ENCODE measurements at regions of chr19 and their contacts with region 1.

Region 1: DNA sequence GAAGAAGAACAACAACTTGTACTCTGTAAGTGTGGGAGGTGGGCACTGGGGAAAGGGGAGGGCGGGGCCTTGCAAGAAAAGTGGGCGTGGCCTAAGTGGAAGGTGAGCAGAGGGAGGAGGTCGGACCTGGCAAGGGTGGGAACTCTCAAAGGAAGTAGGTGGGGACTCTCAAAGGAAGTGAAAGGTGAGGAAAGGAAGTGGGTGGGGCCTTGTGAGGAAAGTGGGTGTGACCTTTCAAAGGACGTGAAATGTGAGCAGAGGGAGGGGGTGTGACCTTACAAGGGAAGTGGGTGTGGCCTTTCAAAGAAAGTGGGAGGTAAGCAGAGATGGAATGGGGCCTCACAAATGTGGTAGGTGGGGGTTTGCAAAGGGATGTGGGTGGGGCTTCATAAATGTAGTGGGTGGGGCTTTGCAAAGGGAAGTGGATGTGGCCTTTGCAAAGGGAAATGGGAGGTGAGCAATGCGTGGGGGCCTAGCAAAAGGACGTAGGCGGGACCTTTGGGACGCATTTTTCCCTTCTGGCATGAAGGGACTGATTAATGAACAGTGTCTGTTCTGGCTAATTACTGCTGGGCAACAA is 25.9 kb downstream of the ACSBG2 start:
- DNase-seq: peak; percentile 9
- H3K4me3 ChIP-seq: no peak overlapping the region
- H3K27ac ChIP-seq: no peak overlapping the region
- H3K4me1 ChIP-seq: no peaks in the 10 kb centered on the region
- H3K27me3 ChIP-seq: no peaks in the 10 kb centered on the region
- CTCF ChIP-seq: no peak

Region 2: GRCh38 chr19:6246174-6247006 is 85.0 kb after region 1 on chr19:
- CTCF ChIA-PET with region 1: no interaction called
- dilution Hi-C with region 1: no loop called
- in situ Hi-C with region 1: no loop called
- intact Hi-C with region 1: no loop called
- DNase-seq: no peak
- H3K4me3 ChIP-seq: no peak overlapping the region
- H3K27ac ChIP-seq: no peak overlapping the region
- H3K4me1 ChIP-seq: peaks cover 7% of the 10 kb centered on the region
- H3K27me3 ChIP-seq: no peaks in the 10 kb centered on the region
- CTCF ChIP-seq: no peak

Region 3: DNA sequence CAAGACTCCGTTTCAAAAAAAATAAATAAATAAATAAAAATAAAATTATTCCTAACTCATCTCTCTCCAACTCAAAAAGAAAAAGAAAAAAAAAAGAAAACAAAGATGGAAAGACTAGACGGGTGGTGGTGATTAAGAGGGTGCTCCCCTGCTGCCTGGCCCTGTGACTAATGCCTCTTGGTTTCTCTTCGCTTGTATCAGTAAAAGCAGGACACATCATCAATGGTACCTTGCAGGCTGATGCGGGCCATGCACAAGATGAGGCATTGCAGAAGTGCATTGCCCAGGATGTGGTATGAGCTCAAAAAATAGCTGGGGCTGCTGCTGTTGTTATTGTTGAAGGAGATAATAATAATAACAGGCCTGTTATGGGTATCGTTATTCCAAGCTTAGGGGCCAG is 157.4 kb after region 1 on chr19:
- CTCF ChIA-PET with region 1: no interaction called
- dilution Hi-C with region 1: no loop called
- in situ Hi-C with region 1: loop called in 1 of 2 experiments (anchors 25 kb)
- intact Hi-C with region 1: no loop called
- DNase-seq: peak; percentile 37
- H3K4me3 ChIP-seq: no peak overlapping the region
- H3K27ac ChIP-seq: no peak overlapping the region
- H3K4me1 ChIP-seq: no peaks in the 10 kb centered on the region
- H3K27me3 ChIP-seq: no peaks in the 10 kb centered on the region
- CTCF ChIP-seq: no peak

Region 4: DNA sequence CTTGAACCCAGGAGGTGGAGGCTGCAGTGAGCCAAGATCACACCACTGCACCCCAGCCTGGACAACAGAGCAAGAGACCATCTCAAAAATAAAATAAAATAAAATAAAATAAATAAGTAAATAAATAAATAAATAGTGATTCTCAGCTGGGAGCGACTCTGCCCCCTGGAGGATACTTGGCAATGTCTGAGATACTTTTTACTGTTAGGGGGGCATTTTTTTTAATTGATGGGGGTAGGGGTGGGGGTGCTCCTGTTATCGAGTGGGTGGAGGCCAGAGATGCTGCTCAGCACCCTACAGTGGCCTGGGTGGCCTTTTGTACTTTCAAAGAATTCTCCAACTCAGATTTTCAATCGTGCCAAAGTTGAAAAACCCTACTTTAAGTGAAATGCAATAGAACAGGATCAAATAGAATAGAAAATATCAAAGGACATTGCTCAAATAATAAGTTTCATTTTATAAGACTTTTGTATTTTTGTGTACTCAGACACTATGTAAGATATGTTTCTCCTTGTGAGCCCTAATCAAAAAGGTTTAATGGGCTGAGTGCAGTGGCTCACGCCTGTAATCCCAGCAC is 192.8 kb after region 1 on chr19:
- CTCF ChIA-PET with region 1: no interaction called
- dilution Hi-C with region 1: no loop called
- in situ Hi-C with region 1: no loop called
- intact Hi-C with region 1: loop called (anchors 5 kb)
- DNase-seq: no peak
- H3K4me3 ChIP-seq: no peak overlapping the region
- H3K27ac ChIP-seq: no peak overlapping the region
- H3K4me1 ChIP-seq: peaks cover 7% of the 10 kb centered on the region
- H3K27me3 ChIP-seq: no peaks in the 10 kb centered on the region
- CTCF ChIP-seq: peak; percentile 28 to 53

Measured in mammary epithelial cell (primary cell).